ENCODE measurements at regions of chr18 and their contacts with region 1.

Region 1: DNA sequence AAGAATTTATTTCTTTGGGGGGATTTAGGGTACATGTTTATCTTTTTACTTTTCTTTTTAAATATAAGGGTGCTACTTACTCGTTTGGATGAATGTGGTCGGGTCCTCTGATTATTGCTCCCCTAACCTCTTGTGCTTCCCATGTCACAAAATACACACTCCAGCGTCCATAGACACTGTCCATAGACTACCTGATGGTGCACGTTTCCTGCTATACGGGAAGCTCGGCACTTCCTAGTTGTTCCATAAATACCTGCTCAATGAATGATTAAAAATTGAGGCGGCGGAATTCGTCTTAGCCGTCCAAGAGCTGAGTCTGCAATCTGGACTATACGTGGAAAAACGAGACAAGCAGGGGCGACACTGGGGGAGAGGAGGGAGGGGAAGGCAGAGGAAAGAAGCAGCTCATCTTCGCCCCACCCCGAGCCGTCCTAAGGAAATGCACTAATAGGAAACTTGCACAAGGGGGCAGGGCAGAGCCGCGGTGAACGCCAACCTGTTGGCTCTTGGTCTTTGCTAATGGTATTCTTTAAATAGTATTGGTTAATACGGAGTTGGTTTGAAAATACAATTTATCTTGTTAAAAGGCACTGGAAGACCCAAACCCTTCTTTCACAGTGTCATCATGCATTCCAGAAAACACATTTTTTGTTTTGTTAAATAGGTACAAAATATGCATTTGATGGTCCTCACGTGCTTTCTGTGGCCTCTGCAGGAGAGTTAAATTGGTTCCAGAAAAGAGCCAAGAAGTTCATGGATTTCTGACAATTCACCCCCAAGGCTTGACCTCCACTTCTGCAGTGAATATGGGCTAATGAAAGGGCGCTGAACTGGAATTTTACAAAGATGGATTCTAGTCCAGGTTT is 73.0 kb upstream of the KCTD1 start:
- DNase-seq: peak; percentile 71
- ATAC-seq: peak; percentile 99
- H3K4me3 Mint-ChIP-seq: peak overlapping the region; percentile 36; the same call in 1 of the 2 replicates
- H3K27ac Mint-ChIP-seq: no peak overlapping the region
- H3K4me1 Mint-ChIP-seq: peaks cover 14% of the 10 kb centered on the region
- H3K27me3 Mint-ChIP-seq: peaks cover 5% of the 10 kb centered on the region
- CTCF ChIP-seq: peak; percentile 80

Region 2: GRCh38 chr18:26383454-26384270 is 237.7 kb before region 1 on chr18:
- CTCF ChIA-PET with region 1: interaction called, 16 read pairs
- POLR2A ChIA-PET with region 1: no interaction called
- DNase-seq: no peak
- ATAC-seq: peak; percentile 83
- H3K4me3 Mint-ChIP-seq: no peak overlapping the region
- H3K27ac Mint-ChIP-seq: no peak overlapping the region
- H3K4me1 Mint-ChIP-seq: peaks cover 13% of the 10 kb centered on the region
- H3K27me3 Mint-ChIP-seq: no peaks in the 10 kb centered on the region
- CTCF ChIP-seq: no peak

Region 3: GRCh38 chr18:26477828-26478466 is 143.4 kb before region 1 on chr18:
- CTCF ChIA-PET with region 1: no interaction called
- POLR2A ChIA-PET with region 1: no interaction called
- DNase-seq: no peak
- ATAC-seq: no peak
- H3K4me3 Mint-ChIP-seq: no peak overlapping the region; the same call in 1 of the 2 replicates
- H3K27ac Mint-ChIP-seq: peak overlapping the region; percentile 51; the same call in 1 of the 2 replicates
- H3K4me1 Mint-ChIP-seq: peaks cover 55% of the 10 kb centered on the region
- H3K27me3 Mint-ChIP-seq: no peaks in the 10 kb centered on the region
- CTCF ChIP-seq: no peak

Region 4: GRCh38 chr18:26548429-26549262 is 72.7 kb before region 1 on chr18 and contains the start of gene KCTD1:
- CTCF ChIA-PET with region 1: interaction called, 12 read pairs
- POLR2A ChIA-PET with region 1: interaction called, 3 read pairs
- DNase-seq: peak; percentile 81
- ATAC-seq: peak; percentile 35
- H3K4me3 Mint-ChIP-seq: peak within 1 kb of the TSS; percentile 80
- H3K27ac Mint-ChIP-seq: no peak within 1 kb of the TSS
- H3K4me1 Mint-ChIP-seq: peaks cover 58% of the 10 kb centered on the region
- H3K27me3 Mint-ChIP-seq: peaks cover 72% of the 10 kb centered on the region
- CTCF ChIP-seq: no peak
- total RNA-seq, gene KCTD1: 16.9 to 23.3 TPM (median 18.7 TPM) in 3 replicates

Region 5: GRCh38 chr18:26656944-26657536 is 35.6 kb after region 1 on chr18:
- CTCF ChIA-PET with region 1: interaction called, 15 read pairs
- POLR2A ChIA-PET with region 1: interaction called, 6 read pairs
- DNase-seq: peak; percentile 69
- ATAC-seq: peak; percentile 35
- H3K4me3 Mint-ChIP-seq: peak overlapping the region; percentile 99
- H3K27ac Mint-ChIP-seq: peak overlapping the region; percentile 95
- H3K4me1 Mint-ChIP-seq: peaks cover 55% of the 10 kb centered on the region
- H3K27me3 Mint-ChIP-seq: peaks cover 37% of the 10 kb centered on the region
- CTCF ChIP-seq: no peak

Region 6: GRCh38 chr18:26717123-26717719 is 95.8 kb after region 1 on chr18:
- CTCF ChIA-PET with region 1: interaction called, 13 read pairs
- POLR2A ChIA-PET with region 1: no interaction called
- DNase-seq: peak; percentile 31
- ATAC-seq: peak; percentile 79
- H3K4me3 Mint-ChIP-seq: no peak overlapping the region
- H3K27ac Mint-ChIP-seq: no peak overlapping the region
- H3K4me1 Mint-ChIP-seq: peaks cover 11% of the 10 kb centered on the region; the same call in 1 of the 2 replicates
- H3K27me3 Mint-ChIP-seq: no peaks in the 10 kb centered on the region; the same call in 1 of the 2 replicates
- CTCF ChIP-seq: no peak

Region 7: DNA sequence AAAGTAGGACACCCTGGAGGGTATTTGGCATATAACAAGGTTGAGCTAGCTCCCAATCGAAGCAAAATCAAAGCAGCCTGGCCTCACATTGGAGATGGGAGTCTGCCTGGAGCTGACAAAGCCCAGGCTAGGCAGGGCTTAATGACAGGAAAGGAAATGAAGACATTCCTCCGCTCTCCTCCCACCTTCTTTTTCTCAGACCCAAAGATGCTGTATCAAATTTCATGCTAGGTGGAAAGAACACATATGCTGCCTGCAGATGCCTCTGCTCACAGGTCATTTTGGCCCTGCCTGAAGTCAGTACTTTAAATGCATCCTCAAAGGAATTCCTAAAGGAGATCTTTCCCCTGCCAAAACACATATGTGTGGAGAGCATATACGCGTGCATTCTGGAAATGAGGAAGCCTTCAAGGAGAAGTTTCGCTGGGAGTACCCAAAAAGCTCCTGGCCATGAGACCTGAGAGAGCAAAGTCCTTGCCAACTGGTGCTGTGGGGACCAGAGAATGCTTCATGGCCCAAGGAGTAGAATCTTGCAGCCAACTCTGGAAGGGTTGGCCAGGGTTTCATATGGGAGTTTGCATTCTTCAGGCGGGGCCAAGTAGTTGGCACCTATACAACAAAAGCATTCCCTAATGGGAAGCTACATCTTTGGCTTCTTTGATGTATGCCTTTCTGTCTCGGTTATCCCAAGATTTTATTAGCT is 156.1 kb after region 1 on chr18:
- CTCF ChIA-PET with region 1: interaction called, 23 read pairs
- POLR2A ChIA-PET with region 1: no interaction called
- DNase-seq: no peak
- ATAC-seq: peak; percentile 96
- H3K4me3 Mint-ChIP-seq: no peak overlapping the region
- H3K27ac Mint-ChIP-seq: no peak overlapping the region
- H3K4me1 Mint-ChIP-seq: peaks cover 57% of the 10 kb centered on the region
- H3K27me3 Mint-ChIP-seq: peaks cover 4% of the 10 kb centered on the region; the same call in 1 of the 2 replicates
- CTCF ChIP-seq: no peak

Region 8: DNA sequence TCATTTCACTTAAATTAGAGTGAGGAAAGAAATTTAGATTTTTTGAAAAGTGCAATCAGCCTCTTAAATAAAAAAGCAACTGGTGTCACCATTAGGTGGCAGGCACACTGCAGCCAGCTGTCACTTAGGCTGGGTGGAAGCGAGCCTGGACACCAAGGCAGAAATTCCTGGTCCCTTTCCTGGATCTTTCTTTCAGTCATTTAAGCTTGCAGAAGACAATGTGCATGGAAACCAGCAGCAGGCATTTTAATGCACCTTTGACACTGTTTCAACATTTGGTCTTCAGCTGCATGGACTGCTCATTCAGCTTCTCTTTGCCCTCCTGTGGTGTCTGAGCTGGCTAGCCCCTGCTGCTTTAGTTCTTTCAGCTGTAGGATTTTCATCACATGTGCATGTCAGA is 183.1 kb after region 1 on chr18:
- CTCF ChIA-PET with region 1: interaction called, 22 read pairs
- POLR2A ChIA-PET with region 1: no interaction called
- DNase-seq: peak; percentile 15
- ATAC-seq: peak; percentile 67
- H3K4me3 Mint-ChIP-seq: no peak overlapping the region
- H3K27ac Mint-ChIP-seq: no peak overlapping the region
- H3K4me1 Mint-ChIP-seq: 0 out of 2 replicates have a peak, but pooled peaks cover 7% of the 10 kb centered on the region
- H3K27me3 Mint-ChIP-seq: no peaks in the 10 kb centered on the region
- CTCF ChIP-seq: no peak